ENCODE measurements at regions of chr4 and their contacts with region 1.

Region 1: DNA sequence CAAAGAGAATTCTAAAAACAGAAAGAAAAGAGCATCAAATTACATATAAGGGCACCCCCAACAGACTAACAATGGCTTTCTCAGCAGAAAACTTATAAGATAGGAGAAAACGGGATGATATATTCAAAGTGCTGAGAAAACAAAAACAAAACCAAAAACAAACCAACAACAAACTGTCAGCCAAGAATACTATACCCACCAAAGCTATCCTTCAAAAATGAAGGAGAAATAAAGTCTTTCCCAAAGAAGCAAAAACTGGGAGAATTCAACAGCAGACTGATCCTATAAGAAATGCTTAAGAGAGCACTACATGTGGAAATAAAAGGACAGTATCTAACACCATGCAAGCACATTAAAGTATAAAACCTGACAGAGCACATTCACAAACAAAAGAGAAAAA is 168.6 kb downstream of the NEK1 start:
- DNase-seq: no peak
- H3K4me3 ChIP-seq: no peak overlapping the region
- H3K27me3 ChIP-seq: no peaks in the 10 kb centered on the region
- CTCF ChIP-seq: no peak

Region 2: DNA sequence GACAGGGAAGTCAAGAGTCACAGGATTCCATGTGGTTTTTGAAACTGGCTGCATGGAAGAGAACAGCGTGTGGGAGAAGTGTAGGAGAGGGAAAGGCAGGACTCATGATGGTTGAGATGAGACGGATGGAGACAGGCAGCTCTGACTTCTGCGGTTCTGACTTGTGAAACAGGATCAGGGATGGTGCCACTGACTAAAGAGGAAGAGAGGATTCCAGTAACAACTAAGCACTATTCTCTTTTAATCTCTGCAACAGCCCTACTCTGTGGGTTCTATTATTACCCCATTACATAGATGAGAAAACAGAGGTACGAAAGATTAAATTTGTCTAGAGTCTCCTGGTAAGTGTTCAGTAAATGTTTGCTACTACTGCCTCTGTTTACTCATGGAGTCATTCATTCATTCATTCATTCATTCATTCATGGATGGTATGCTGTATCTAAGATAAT is 590.0 kb before region 1 on chr4:
- CTCF ChIA-PET with region 1: no interaction called
- POLR2A ChIA-PET with region 1: no interaction called
- DNase-seq: no peak
- H3K4me3 ChIP-seq: no peak overlapping the region
- H3K27me3 ChIP-seq: no peaks in the 10 kb centered on the region
- CTCF ChIP-seq: no peak

Region 3: DNA sequence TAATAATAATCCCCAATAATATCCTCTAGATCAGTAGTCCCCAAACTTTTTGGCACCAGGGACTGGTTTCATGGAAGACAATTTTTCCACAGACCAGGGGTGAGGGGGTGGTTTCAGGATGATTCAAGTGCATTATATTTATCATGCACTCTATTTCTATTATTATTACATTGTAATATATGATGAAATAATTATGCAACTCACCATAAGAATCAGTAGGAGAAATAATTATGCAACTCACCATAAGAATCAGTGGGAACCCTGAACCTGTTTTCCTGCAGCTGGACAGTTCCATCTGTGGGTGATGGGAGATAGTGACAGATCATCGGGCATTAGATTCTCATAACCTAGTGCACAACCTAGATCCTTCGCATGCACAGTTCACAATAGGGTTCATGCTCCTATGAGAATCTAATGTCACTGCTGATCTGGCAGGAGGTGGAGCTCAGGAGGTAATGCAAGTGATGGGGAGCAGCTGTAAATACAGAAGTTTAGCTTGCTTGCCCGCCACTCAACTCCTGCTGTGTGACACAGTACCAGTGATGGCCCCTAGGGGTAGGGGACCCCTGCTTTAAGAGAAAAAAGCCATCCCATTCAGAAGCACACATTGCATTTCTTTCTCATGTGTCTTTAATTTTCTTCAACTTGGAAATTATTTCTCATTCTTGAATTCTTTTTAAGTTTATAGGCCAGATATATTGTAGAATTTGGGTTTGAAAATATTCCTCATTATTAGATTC is 157.0 kb before region 1 on chr4:
- CTCF ChIA-PET with region 1: no interaction called
- POLR2A ChIA-PET with region 1: interaction called, 17 read pairs
- DNase-seq: no peak
- H3K4me3 ChIP-seq: no peak overlapping the region
- H3K27me3 ChIP-seq: no peaks in the 10 kb centered on the region
- CTCF ChIP-seq: no peak

Region 4: GRCh38 chr4:169506903-169507302 is 63.2 kb after region 1 on chr4:
- CTCF ChIA-PET with region 1: no interaction called
- POLR2A ChIA-PET with region 1: no interaction called
- DNase-seq: no peak
- H3K4me3 ChIP-seq: no peak overlapping the region
- H3K27me3 ChIP-seq: no peaks in the 10 kb centered on the region
- CTCF ChIP-seq: no peak